ENCODE measurements at regions of chr14 and their contacts with region 1.

Region 1: GRCh38 chr14:36647824-36648753 is 13.6 kb upstream of the PAX9 start:
- DNase-seq: peak; percentile 17
- ATAC-seq: peak; percentile 80 to 89

Region 2: GRCh38 chr14:37150414-37150813 is 502.3 kb after region 1 on chr14:
- intact Hi-C with region 1: loop called in 1 of 2 experiments (anchors 10 kb)
- DNase-seq: no peak
- ATAC-seq: peak in 1 of 2 donors; percentile 47